Caco-2 (cell line): ENCODE measurements at regions of chr3 and their contacts with region 1.

Region 1: GRCh38 chr3:156674046-156674910 is at the start of gene TIPARP:
- DNase-seq: peak; percentile 98 to 99
- H3K4me3 ChIP-seq: peak within 1 kb of the TSS; percentile 84
- H3K4me3 Mint-ChIP-seq: peak within 1 kb of the TSS; percentile 97
- H3K27ac Mint-ChIP-seq: peak within 1 kb of the TSS; percentile 95
- H3K4me1 ChIP-seq: 0 out of 2 replicates have a peak, but pooled peaks cover 8% of the 10 kb centered on the region
- H3K4me1 Mint-ChIP-seq: no peaks in the 10 kb centered on the region
- H3K27me3 ChIP-seq: no peaks in the 10 kb centered on the region
- H3K27me3 Mint-ChIP-seq: no peaks in the 10 kb centered on the region
- CTCF ChIP-seq: peak; percentile 58 to 78
- total RNA-seq, gene TIPARP: 15.8 and 18.2 TPM in 2 replicates

Region 2: DNA sequence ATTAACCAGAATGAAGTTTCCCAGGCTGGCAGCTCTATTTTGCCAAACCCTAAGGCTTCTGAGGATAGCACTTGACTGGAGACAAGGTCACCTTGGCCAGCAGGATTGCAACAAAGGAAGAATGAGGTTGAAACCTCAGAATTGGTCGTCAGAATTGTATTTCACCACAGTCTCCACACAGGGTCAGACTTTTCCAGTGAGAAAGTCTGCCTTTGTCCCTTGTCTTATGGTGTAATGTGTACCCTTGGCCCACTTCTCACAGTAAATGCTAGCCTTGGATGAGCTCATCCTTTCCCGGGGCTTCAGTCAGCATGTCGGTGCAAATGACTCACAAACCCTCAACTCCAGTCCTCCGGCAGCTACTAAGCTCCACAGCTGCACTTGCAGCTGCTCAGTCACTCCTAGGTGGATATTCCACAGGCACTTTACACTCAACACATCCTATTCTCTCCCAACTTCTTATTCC is 139.1 kb before region 1 on chr3:
- CTCF ChIA-PET with region 1: interaction called, 12 read pairs
- POLR2A ChIA-PET with region 1: interaction called, 4 read pairs
- intact Hi-C with region 1: loop called (anchors 1 kb)
- DNase-seq: peak; percentile 76 to 79
- H3K4me3 ChIP-seq: no peak overlapping the region
- H3K4me3 Mint-ChIP-seq: peak overlapping the region; percentile 1
- H3K27ac Mint-ChIP-seq: peak overlapping the region; percentile 56
- H3K4me1 ChIP-seq: peaks cover 28% of the 10 kb centered on the region
- H3K4me1 Mint-ChIP-seq: peaks cover 15% of the 10 kb centered on the region
- H3K27me3 ChIP-seq: no peaks in the 10 kb centered on the region
- H3K27me3 Mint-ChIP-seq: no peaks in the 10 kb centered on the region
- CTCF ChIP-seq: peak in 1 of 2 experiments; percentile 24

Region 3: DNA sequence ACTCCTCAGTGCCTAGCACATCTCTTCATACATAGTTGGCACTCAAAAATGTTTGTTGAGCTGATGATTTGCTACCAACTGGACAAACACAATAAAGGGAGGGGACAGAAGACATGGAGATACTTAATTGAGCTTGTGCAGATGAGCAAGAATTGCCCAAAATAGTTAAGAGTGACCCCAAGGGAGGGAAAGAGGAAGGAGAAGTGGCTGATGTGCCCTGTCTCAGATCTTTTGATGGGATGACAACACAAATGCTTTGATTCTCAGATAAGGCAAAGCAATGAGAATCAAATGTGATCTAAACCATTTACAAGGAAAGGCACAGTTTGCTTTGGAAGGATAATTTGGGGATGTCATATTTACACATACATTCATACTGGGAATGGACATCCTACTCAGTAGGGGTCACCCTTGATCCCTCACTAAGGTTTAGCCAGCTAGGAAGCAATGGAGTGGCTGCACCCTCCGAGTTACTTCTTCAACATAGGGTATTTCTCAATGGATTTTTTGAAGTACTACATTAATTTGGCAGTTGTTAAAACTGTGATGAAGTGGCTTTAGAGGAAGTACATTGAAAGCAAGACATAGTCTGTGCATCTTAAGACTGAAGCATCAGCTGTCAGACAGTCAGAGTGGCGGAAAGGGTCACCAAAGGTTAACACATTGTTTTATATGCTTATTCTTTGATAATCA is 97.5 kb before region 1 on chr3:
- CTCF ChIA-PET with region 1: interaction called, 9 read pairs
- POLR2A ChIA-PET with region 1: no interaction called
- intact Hi-C with region 1: loop called (anchors 1 kb)
- DNase-seq: peak in 1 of 2 experiments; percentile 35
- H3K4me3 ChIP-seq: no peak overlapping the region
- H3K4me3 Mint-ChIP-seq: no peak overlapping the region
- H3K27ac Mint-ChIP-seq: no peak overlapping the region
- H3K4me1 ChIP-seq: 0 out of 2 replicates have a peak, but pooled peaks cover 4% of the 10 kb centered on the region
- H3K4me1 Mint-ChIP-seq: no peaks in the 10 kb centered on the region
- H3K27me3 ChIP-seq: no peaks in the 10 kb centered on the region
- H3K27me3 Mint-ChIP-seq: peaks cover 11% of the 10 kb centered on the region
- CTCF ChIP-seq: peak in 1 of 2 experiments; percentile 9

Region 4: GRCh38 chr3:156627946-156628569 is 46.2 kb before region 1 on chr3:
- CTCF ChIA-PET with region 1: interaction called, 4 read pairs
- POLR2A ChIA-PET with region 1: interaction called, 4 read pairs
- intact Hi-C with region 1: loop called (anchors 1 kb)
- DNase-seq: peak in 1 of 2 experiments; percentile 46
- H3K4me3 ChIP-seq: no peak overlapping the region
- H3K4me3 Mint-ChIP-seq: peak overlapping the region; percentile 58
- H3K27ac Mint-ChIP-seq: peak overlapping the region; percentile 79
- H3K4me1 ChIP-seq: peaks cover 54% of the 10 kb centered on the region
- H3K4me1 Mint-ChIP-seq: peaks cover 28% of the 10 kb centered on the region
- H3K27me3 ChIP-seq: no peaks in the 10 kb centered on the region
- H3K27me3 Mint-ChIP-seq: no peaks in the 10 kb centered on the region
- CTCF ChIP-seq: no peak

Region 5: GRCh38 chr3:156816800-156817645 is 142.7 kb after region 1 on chr3:
- CTCF ChIA-PET with region 1: no interaction called
- POLR2A ChIA-PET with region 1: no interaction called
- intact Hi-C with region 1: loop called (anchors 1 kb)
- DNase-seq: peak; percentile 94 to 96
- H3K4me3 ChIP-seq: peak overlapping the region; percentile 84
- H3K4me3 Mint-ChIP-seq: peak overlapping the region; percentile 90
- H3K27ac Mint-ChIP-seq: peak overlapping the region; percentile 91
- H3K4me1 ChIP-seq: peaks cover 43% of the 10 kb centered on the region
- H3K4me1 Mint-ChIP-seq: peaks cover 14% of the 10 kb centered on the region
- H3K27me3 ChIP-seq: no peaks in the 10 kb centered on the region
- H3K27me3 Mint-ChIP-seq: no peaks in the 10 kb centered on the region
- CTCF ChIP-seq: no peak

Region 6: GRCh38 chr3:157088601-157089454 is 414.6 kb after region 1 on chr3:
- CTCF ChIA-PET with region 1: interaction called, 14 read pairs
- POLR2A ChIA-PET with region 1: interaction called, 26 read pairs
- intact Hi-C with region 1: loop called (anchors 2 kb)
- DNase-seq: peak; percentile 95 to 97
- H3K4me3 ChIP-seq: peak overlapping the region; percentile 58
- H3K4me3 Mint-ChIP-seq: peak overlapping the region; percentile 81
- H3K27ac Mint-ChIP-seq: peak overlapping the region; percentile 89
- H3K4me1 ChIP-seq: peaks cover 26% of the 10 kb centered on the region
- H3K4me1 Mint-ChIP-seq: peaks cover 26% of the 10 kb centered on the region
- H3K27me3 ChIP-seq: no peaks in the 10 kb centered on the region
- H3K27me3 Mint-ChIP-seq: no peaks in the 10 kb centered on the region
- CTCF ChIP-seq: no peak

Region 7: DNA sequence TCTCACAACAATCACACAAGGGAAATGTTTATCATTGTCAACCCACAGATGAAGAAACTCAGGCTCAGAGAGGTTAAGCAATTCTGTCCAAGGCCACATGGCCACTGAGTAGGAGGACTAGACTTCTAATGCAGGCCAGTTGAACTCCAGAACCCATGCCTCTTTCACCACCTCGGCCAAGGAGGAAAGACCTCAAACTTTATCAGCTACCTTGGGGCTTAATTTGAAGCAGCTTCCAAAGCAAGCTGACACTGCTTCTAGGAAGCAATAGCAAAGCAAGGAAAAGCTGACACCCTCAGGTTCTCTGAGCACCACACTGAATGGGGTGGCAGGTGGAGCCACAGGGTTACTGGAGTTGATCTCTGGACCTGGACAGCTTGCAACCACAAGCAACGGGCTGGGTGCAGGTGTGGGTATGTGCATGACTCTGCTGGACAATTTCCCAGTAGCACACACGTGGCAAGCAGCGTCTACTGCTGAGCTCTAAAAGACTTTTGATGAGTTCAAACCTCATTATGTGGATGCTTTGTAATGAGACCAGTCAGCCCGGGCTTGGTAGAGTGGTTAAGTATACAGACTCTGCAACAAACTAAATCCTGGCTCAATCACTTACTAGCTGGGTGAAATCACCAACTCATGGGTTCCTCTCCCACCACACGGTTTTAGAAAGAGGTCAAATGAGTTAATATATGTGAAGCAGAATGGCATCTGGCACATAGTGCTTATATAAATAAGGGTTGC is 462.5 kb after region 1 on chr3:
- CTCF ChIA-PET with region 1: no interaction called
- POLR2A ChIA-PET with region 1: no interaction called
- intact Hi-C with region 1: loop called (anchors 1 kb)
- DNase-seq: no peak
- H3K4me3 ChIP-seq: no peak overlapping the region
- H3K4me3 Mint-ChIP-seq: no peak overlapping the region
- H3K27ac Mint-ChIP-seq: no peak overlapping the region
- H3K4me1 ChIP-seq: peaks cover 27% of the 10 kb centered on the region
- H3K4me1 Mint-ChIP-seq: no peaks in the 10 kb centered on the region
- H3K27me3 ChIP-seq: no peaks in the 10 kb centered on the region
- H3K27me3 Mint-ChIP-seq: no peaks in the 10 kb centered on the region
- CTCF ChIP-seq: no peak